Common myeloid progenitor, CD34-positive (primary cell): ENCODE measurements at regions of chr20 and their contacts with region 1.

Region 1: GRCh38 chr20:32559753-32560380 is 25.3 kb downstream of the NOL4L start:
- DNase-seq: no peak
- H3K4me3 ChIP-seq: no peak overlapping the region
- H3K27ac ChIP-seq: no peak overlapping the region
- H3K4me1 ChIP-seq: peaks cover 0 to 54% (median 40%) of the 10 kb centered on the region in 4 experiments
- H3K27me3 ChIP-seq: no peaks in the 10 kb centered on the region

Region 2: GRCh38 chr20:32535953-32536823 is 23.7 kb before region 1 on chr20:
- CTCF ChIA-PET with region 1: interaction called, 25 read pairs
- POLR2A ChIA-PET with region 1: interaction called, 3 read pairs
- DNase-seq: peak in 2 of 3 donors; percentile 82 to 88
- H3K4me3 ChIP-seq: peak overlapping the region; percentile 27 to 73 (median 62)
- H3K27ac ChIP-seq: peak overlapping the region in 1 of 2 experiments; percentile 70
- H3K4me1 ChIP-seq: peaks cover 19 to 89% (median 79%) of the 10 kb centered on the region in 4 experiments
- H3K27me3 ChIP-seq: no peaks in the 10 kb centered on the region